Activated CD8-positive, alpha-beta T cell treated with anti-CD3 and anti-CD28 coated beads for 36 hours (primary cell): ENCODE measurements at regions of chr10 and their contacts with region 1.

Region 1: DNA sequence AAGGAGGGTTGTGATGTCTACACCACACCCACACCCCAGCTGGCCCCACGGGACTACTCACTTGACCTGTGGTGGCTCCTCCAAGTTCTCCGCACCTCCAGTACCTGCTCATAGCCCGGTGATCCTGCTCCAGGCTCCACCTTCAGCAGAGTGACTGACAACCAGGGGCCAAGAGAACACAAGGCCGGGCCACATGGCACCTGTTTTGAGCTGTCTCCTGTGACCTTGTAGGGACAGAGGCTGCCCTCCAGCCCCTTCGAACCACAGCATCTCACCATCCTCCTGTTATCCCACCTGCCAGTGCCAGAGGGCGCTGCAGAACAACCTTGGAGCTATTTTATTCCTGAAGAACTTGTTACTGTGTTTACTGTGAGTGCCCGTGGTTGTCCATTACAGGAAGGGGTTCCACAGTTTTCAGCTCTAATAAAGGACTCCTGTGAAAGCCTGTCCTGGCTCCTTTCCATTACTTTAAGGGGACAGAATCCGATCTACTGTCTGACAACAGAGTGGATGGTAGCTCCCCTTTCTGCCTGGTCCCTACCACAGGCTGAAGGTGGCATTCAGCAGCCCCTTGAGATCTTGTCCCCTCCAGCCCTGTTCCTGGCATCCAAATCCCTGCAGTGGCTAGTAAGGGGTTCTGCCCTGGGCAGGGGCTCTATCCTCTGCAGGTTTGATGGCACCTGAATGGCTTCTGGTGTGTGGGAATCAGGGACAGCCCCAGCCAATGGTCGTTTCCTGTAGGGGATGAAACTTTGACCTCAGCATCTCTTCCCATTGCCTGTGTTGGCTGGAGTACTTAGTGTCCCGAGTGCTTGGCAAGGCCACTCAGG is 50.8 kb downstream of the C10orf120 start:
- DNase-seq: peak; percentile 61
- ATAC-seq: peak; percentile 56
- H3K4me3 Mint-ChIP-seq: no peak overlapping the region
- H3K27ac Mint-ChIP-seq: no peak overlapping the region
- H3K4me1 Mint-ChIP-seq: no peaks in the 10 kb centered on the region
- H3K27me3 Mint-ChIP-seq: peaks cover 20% of the 10 kb centered on the region
- CTCF ChIP-seq: peak; percentile 74

Region 2: GRCh38 chr10:122461367-122461728 is 187.5 kb before region 1 on chr10 and contains the start of gene HTRA1:
- CTCF ChIA-PET with region 1: no interaction called
- POLR2A ChIA-PET with region 1: no interaction called
- intact Hi-C with region 1: no loop called
- DNase-seq: no peak
- ATAC-seq: peak; percentile 32
- H3K4me3 Mint-ChIP-seq: peak within 1 kb of the TSS; percentile 66
- H3K27ac Mint-ChIP-seq: no peak within 1 kb of the TSS
- H3K4me1 Mint-ChIP-seq: peaks cover 7% of the 10 kb centered on the region
- H3K27me3 Mint-ChIP-seq: peaks cover 65% of the 10 kb centered on the region
- CTCF ChIP-seq: no peak
- total RNA-seq, gene HTRA1: not detected

Region 3: DNA sequence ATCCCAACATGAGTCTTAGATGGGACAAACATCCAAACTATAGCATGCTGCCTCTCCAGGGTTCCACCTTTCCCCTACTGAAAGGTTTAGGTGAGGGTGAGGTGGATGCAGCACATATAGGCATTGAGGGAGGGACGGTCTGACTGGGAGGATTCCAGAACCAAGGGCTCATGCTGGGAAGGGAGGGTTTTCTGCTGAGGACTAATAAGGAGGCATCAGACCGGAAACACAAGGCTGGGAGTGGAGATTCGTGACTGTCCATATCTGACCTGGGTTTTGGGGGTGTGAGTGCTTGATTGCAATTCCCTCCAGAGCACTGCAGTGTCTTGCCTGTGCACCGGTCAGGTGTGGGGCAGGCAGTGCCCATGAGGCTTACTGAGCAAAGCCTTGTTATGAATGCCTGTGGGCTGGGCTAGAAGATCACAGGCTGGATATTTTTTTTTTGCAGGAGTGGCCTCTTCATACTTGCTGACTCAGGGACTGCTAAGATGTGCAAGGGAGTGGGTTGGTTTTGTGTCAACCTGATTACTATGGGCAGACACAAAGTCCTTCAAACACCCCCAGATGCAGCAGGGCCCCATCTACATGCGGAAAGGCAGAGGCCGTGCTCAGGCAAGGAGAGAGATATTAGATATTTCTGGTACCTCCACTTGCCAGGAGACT is 61.6 kb before region 1 on chr10:
- CTCF ChIA-PET with region 1: no interaction called
- POLR2A ChIA-PET with region 1: no interaction called
- intact Hi-C with region 1: no loop called
- DNase-seq: no peak
- ATAC-seq: no peak
- H3K4me3 Mint-ChIP-seq: no peak overlapping the region
- H3K27ac Mint-ChIP-seq: no peak overlapping the region
- H3K4me1 Mint-ChIP-seq: no peaks in the 10 kb centered on the region
- H3K27me3 Mint-ChIP-seq: no peaks in the 10 kb centered on the region
- CTCF ChIP-seq: no peak

Region 4: GRCh38 chr10:122637376-122637775 is 11.4 kb before region 1 on chr10:
- CTCF ChIA-PET with region 1: interaction called, 11 read pairs
- POLR2A ChIA-PET with region 1: no interaction called
- intact Hi-C with region 1: no loop called
- DNase-seq: no peak
- ATAC-seq: no peak
- H3K4me3 Mint-ChIP-seq: no peak overlapping the region
- H3K27ac Mint-ChIP-seq: no peak overlapping the region
- H3K4me1 Mint-ChIP-seq: no peaks in the 10 kb centered on the region
- H3K27me3 Mint-ChIP-seq: peaks cover 7% of the 10 kb centered on the region
- CTCF ChIP-seq: no peak

Region 5: DNA sequence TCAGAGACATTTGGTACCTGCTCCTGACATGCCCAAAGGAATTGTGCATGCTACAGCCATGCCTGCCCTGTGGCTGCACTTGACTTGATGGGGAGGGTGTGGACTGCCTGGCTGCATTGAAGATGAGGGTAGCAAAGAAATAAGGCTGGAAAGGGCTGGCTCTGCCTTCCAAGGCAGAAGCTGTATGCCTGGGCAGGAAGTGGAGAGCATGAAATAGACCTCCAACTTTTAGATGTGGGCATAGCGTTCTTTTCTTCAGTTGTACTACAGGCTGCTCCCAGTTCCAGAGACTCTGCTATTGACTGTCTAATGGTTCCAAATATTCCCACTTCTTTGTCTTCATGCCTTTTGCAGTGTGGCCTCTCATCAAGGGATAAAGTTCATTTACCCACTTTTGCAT is 47.9 kb after region 1 on chr10:
- CTCF ChIA-PET with region 1: interaction called, 14 read pairs
- POLR2A ChIA-PET with region 1: no interaction called
- intact Hi-C with region 1: no loop called
- DNase-seq: no peak
- ATAC-seq: no peak
- H3K4me3 Mint-ChIP-seq: no peak overlapping the region
- H3K27ac Mint-ChIP-seq: no peak overlapping the region
- H3K4me1 Mint-ChIP-seq: no peaks in the 10 kb centered on the region
- H3K27me3 Mint-ChIP-seq: peaks cover 8% of the 10 kb centered on the region
- CTCF ChIP-seq: no peak

Region 6: GRCh38 chr10:122703439-122704118 is 54.8 kb after region 1 on chr10:
- CTCF ChIA-PET with region 1: interaction called, 15 read pairs
- POLR2A ChIA-PET with region 1: no interaction called
- intact Hi-C with region 1: no loop called
- DNase-seq: peak; percentile 69
- ATAC-seq: peak; percentile 66
- H3K4me3 Mint-ChIP-seq: no peak overlapping the region
- H3K27ac Mint-ChIP-seq: no peak overlapping the region
- H3K4me1 Mint-ChIP-seq: no peaks in the 10 kb centered on the region
- H3K27me3 Mint-ChIP-seq: peaks cover 7% of the 10 kb centered on the region
- CTCF ChIP-seq: peak; percentile 83